ENCODE measurements at regions of chr6 and their contacts with region 1.

Region 1: DNA sequence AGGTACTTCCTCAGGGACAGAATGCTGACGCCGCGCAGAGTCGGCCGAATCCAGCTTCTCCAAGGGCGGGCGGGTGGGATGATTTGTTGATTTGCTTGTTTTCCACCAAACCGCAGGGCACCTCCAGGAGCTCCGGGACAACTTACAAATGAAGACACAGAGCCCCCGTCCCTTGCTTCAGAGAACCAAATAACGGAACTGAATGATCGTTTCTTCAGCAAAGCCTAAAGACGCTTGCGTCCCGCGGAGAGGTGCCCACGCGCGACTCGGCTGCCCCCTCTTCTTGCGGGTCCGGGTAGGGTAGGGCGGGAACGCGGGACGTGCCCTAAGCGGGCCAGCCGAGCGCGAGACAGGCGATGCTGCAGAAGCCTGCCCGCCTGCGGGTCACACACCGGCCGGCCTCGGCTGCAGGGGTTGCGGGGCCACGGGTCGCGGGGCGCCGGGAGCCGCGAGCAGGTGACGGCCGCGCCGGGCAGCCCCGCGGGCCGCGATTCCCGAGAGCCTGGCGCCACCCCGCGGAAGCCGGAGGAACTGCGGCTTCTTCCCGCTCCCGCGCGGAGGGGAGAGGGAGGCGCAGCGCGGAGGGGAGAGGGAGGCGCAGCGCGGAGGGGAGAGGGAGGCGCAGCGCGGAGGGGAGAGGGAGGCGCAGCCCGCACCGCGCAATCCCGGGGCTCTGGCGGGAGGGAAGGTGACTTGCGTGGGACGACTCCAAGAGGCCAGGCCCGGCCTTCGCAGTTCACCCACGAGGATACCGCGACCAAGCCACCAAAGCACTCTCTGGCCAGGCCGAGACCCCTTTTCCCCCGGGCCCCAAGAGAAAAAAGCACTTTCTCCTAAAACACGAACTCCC is 7.7 kb upstream of the FOXF2 start:
- DNase-seq: peak; percentile 60
- H3K4me3 ChIP-seq: peak overlapping the region; percentile 27
- H3K27ac ChIP-seq: no peak overlapping the region
- H3K4me1 ChIP-seq: no peaks in the 10 kb centered on the region
- H3K27me3 ChIP-seq: peaks cover 99% of the 10 kb centered on the region
- CTCF ChIP-seq: peak; percentile 68

Region 2: GRCh38 chr6:912871-913835 is 468.6 kb before region 1 on chr6:
- CTCF ChIA-PET with region 1: no interaction called
- POLR2A ChIA-PET with region 1: no interaction called
- intact Hi-C with region 1: loop called (anchors 10 kb)
- DNase-seq: no peak
- H3K4me3 ChIP-seq: no peak overlapping the region
- H3K27ac ChIP-seq: no peak overlapping the region
- H3K4me1 ChIP-seq: no peaks in the 10 kb centered on the region
- H3K27me3 ChIP-seq: no peaks in the 10 kb centered on the region
- CTCF ChIP-seq: no peak

Region 3: DNA sequence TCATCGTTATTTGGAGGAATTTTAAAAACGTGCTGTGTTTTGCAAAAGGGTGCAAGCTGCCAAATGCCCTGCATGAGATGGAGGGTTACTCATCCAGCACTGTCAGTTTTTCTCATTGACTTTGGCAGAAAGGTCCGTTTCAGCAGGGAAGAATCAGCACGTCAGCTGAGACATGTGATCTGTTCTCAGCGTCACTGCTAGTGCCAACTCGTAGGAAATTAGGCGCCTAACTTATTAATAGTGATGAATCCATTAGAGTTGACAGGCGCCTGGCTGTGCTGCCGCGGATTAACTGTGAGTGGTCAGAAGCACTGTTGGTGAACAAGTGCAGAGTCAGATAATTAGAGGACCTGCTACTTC is 245.3 kb before region 1 on chr6:
- CTCF ChIA-PET with region 1: no interaction called
- POLR2A ChIA-PET with region 1: no interaction called
- intact Hi-C with region 1: no loop called
- DNase-seq: peak; percentile 70
- H3K4me3 ChIP-seq: no peak overlapping the region
- H3K27ac ChIP-seq: no peak overlapping the region
- H3K4me1 ChIP-seq: peaks cover 10% of the 10 kb centered on the region
- H3K27me3 ChIP-seq: no peaks in the 10 kb centered on the region
- CTCF ChIP-seq: no peak

Region 4: GRCh38 chr6:1396952-1397868 is 15.5 kb after region 1 on chr6:
- CTCF ChIA-PET with region 1: interaction called, 10 read pairs
- POLR2A ChIA-PET with region 1: no interaction called
- intact Hi-C with region 1: no loop called
- DNase-seq: peak; percentile 78
- H3K4me3 ChIP-seq: no peak overlapping the region
- H3K27ac ChIP-seq: no peak overlapping the region
- H3K4me1 ChIP-seq: no peaks in the 10 kb centered on the region
- H3K27me3 ChIP-seq: peaks cover 41% of the 10 kb centered on the region
- CTCF ChIP-seq: peak; percentile 97

Region 5: DNA sequence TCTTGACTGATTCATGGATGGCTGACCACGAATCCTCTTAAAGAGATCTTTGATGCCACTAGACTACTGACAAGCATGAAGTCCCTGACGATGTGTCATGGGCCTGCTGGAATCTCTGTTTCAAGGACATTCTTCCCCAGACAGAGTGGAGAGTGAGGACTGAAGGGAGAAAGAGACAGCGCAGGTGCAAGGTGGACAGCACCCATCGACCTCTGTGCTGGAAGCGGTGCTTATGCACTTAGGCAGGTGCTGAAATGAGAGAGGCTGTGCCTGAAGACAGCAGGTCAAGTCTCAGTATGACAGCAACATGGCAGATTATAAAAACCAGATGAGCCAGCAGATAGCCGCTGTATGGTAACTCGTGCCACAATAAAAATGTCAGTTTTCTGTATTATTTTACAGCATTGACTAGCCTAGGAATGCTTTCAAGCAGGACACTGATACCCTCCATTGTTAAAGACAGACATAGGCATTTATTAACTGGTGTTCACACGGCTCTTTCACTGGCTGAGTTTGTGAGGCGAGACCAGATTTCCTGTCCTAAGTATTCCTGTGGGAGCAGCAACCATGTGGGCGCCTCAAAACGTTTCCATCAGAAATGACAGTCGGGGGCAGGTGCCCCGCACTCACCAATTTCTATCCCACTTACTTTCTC is 275.5 kb after region 1 on chr6:
- CTCF ChIA-PET with region 1: no interaction called
- POLR2A ChIA-PET with region 1: no interaction called
- intact Hi-C with region 1: no loop called
- DNase-seq: peak; percentile 52
- H3K4me3 ChIP-seq: no peak overlapping the region
- H3K27ac ChIP-seq: no peak overlapping the region
- H3K4me1 ChIP-seq: peaks cover 11% of the 10 kb centered on the region
- H3K27me3 ChIP-seq: no peaks in the 10 kb centered on the region
- CTCF ChIP-seq: no peak

Measured in A673 (cell line).